GM13976 (cell line): ENCODE measurements at regions of chrX and their contacts with region 1.

Region 1: GRCh38 chrX:41759817-41760216 is 35.8 kb downstream of the GPR82 start:
- DNase-seq: peak; percentile 39
- CTCF ChIP-seq: peak; percentile 35

Region 2: DNA sequence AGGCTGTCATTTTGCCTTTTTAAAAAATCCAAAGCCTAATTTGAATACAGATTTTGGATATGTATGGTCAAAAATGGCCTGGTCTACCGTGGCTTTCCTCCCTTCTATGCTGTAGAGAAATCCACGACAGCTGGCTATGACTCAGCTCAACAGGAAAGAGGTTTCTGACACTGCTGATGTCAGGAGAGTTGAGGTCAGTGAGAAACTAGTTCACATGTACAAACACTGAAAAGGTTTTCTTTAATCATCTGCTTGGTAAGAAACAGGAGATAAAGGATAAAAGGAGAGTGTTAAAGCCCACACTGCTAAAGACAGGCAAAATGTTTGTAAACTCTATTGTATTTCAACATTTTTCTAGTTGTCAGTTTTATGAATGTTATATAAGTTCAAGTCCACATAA is 198.8 kb before region 1 on chrX:
- in situ Hi-C with region 1: loop called (anchors 10 kb)
- DNase-seq: peak; percentile 41
- CTCF ChIP-seq: no peak